ENCODE measurements at regions of chr1 and their contacts with region 1.

Region 1: DNA sequence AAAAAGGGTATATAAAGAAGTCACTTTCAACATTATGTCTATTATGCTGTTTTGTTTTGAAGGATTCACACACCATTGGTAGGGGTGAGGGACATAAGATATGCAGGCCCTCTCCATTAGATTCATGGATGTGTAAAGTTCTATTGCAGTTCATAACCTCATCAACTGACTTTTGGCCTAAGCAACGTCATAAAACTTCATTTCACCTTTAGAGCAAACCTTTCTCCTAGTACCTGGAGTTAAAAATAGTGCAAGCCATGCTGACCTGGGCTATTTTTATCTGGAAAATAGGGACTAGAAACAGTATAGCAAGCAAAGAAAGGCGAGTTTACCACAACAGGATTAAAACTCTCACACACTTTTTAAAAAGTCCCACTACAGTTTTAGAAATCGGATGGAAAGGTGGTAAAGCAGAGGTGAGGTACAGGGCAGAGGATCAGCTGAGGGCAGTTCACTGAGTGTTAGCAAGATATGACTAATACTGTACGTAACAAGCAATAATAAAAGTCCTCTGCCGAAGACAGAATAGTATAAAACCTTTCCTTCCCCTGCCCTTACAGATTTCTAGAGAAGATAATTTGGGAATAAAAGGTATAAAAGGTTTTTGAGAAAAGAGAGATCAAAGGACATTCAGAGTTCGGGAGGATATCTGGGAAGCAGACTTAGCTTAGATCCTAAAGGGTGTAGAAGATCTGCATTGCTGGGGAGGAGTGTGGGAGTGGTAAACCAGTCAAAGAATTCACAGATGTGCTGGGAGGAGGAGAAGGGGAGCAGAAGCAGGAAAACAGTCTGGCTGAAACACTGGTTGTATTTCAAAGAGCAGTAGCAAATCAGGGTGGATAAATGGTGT is 14.3 kb downstream of the EGLN1 start:
- DNase-seq: peak; percentile 68
- H3K4me3 Mint-ChIP-seq: no peak overlapping the region
- H3K27ac Mint-ChIP-seq: no peak overlapping the region
- H3K4me1 Mint-ChIP-seq: peaks cover 15% of the 10 kb centered on the region
- H3K27me3 Mint-ChIP-seq: no peaks in the 10 kb centered on the region
- CTCF ChIP-seq: no peak

Region 2: GRCh38 chr1:231395076-231395995 is 12.4 kb before region 1 on chr1:
- CTCF ChIA-PET with region 1: interaction called, 5 read pairs
- POLR2A ChIA-PET with region 1: interaction called, 56 read pairs
- intact Hi-C with region 1: no loop called
- DNase-seq: peak; percentile 88
- H3K4me3 Mint-ChIP-seq: peak overlapping the region; percentile 52
- H3K27ac Mint-ChIP-seq: peak overlapping the region; percentile 79
- H3K4me1 Mint-ChIP-seq: peaks cover 72% of the 10 kb centered on the region
- H3K27me3 Mint-ChIP-seq: no peaks in the 10 kb centered on the region
- CTCF ChIP-seq: no peak

Region 3: DNA sequence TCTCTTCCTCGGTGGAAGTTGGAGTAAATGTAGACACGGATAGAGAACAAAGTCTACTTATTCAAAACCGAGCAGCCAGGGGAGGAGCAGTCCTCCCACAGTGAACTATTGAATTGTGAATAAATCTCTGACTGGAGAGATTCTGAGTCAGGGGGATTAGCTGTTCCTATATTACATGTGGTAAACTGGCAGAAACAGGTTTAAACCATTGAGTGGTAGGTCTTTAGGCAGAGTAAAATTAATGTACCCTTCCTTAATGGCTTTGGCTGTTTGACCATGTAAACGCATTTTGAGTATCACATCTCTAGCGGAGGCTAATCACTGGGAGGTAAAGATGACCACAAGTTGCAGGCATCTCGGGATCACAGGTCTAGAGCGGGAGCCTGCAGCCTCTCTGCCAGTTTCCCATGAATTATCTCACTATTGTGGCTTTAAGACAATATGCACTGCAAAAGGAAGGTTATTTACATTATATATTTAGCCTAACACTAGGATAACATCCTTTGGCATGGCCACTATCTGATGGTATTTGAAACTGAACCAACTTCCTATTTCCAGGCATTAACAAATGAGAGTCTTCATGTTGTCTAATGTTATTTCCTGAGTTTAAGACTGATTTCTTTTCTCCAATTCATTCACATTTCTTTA is 211.0 kb after region 1 on chr1:
- CTCF ChIA-PET with region 1: no interaction called
- POLR2A ChIA-PET with region 1: no interaction called
- intact Hi-C with region 1: no loop called
- DNase-seq: no peak
- H3K4me3 Mint-ChIP-seq: no peak overlapping the region
- H3K27ac Mint-ChIP-seq: no peak overlapping the region
- H3K4me1 Mint-ChIP-seq: no peaks in the 10 kb centered on the region
- H3K27me3 Mint-ChIP-seq: peaks cover 91% of the 10 kb centered on the region
- CTCF ChIP-seq: no peak

Measured in MCF 10A (cell line).